HEK293 (cell line): ENCODE measurements at regions of chr2 and their contacts with region 1.

Region 1: DNA sequence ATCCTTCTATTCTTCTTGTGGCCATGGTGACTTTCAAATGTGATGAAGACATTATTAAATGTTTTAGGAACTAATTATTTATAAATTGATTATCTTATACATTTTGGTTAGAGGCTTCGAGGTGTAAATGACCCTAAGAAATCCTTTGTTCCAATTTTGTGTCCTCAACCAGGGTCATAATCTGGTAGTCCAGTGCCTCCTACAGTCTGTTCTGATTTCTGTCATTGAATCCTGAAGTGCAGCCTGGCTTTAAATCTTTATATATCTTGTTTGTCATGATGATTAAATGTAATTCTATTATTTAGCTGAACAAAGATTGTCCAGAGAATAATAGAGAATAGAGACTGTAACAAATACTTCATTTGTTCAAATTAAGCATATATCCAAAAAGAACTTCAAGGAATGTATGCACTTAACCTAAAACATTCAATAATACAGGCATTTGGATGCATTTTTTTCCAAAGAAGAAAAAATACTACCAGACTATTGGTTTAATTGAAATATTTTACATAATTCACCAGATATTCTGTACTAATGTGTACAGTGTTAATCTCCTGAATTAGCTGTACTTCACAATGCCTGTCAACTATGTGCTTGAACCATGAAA is 89.8 kb downstream of the PRPF40A start:
- H3K4me3 ChIP-seq: no peak overlapping the region
- H3K27ac ChIP-seq: no peak overlapping the region
- H3K4me1 ChIP-seq: no peaks in the 10 kb centered on the region
- CTCF ChIP-seq: no peak

Region 2: DNA sequence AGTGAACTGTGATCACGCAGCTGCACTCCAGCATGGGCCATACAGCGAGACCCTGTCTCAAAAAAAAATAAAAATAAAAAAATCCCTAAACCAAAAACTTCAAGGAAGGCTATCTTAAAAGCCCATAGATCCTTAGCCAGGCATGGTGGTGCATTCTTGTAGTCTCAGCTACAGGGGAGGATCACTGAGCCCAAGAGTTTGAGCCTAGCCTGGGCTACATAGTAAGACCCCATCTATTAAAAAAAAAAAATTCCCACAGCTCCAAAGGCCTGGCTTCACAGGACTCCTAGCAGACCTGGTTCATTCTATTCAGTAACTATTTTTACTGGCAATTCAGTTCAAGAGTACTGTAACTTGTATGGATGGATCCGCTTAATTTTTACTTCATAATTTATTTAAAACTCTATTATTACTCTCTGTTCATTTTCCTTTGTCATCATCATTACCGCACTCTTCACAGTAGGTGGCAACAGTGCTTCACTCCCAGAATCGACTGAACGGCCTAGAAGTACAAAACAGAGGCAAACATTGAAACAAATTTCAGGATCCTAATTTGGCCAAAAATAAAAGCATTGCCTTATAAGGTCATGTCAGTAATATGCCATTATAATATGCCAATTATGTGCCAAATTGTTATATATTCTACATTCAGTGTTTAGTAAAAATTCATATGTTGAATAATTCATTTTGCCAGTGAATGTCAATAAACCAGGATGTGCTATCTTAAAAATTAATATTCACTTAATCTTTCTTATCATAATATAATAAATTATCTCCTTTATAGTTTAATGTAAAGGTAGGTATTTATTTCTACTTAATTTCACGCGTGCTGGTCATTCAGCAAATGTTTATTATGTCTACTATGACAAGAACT is 437.6 kb before region 1 on chr2:
- CTCF ChIA-PET with region 1: interaction called, 12 read pairs
- POLR2A ChIA-PET with region 1: no interaction called
- H3K4me3 ChIP-seq: no peak overlapping the region
- H3K27ac ChIP-seq: no peak overlapping the region
- H3K4me1 ChIP-seq: no peaks in the 10 kb centered on the region
- CTCF ChIP-seq: peak; percentile 65

Region 3: DNA sequence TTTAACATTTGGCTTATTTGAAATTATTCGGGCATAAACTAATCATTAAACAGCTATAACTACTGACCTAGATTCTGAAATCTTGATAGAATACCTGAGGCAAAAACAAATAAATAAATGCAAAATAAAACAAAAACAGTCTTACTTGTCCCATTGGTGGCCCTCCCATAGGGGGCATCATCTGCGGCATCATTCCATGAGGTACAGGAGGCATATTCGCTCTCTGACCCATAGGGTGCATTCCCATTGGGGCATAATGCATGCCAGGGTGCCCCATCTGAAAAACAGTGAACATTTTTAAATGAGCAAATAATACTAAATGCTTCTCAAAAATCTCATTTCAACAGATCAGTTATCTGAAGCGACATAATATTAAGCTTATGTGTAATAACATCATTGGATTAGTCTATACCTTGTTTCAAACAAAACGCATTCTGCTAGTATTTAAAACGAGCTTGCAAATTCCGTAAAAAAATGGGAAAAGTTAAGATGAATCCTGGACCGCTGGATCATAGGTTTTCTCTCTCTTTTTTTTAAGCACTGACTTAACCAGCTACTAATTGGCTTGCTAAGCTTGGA is 88.5 kb after region 1 on chr2:
- CTCF ChIA-PET with region 1: no interaction called
- POLR2A ChIA-PET with region 1: no interaction called
- H3K4me3 ChIP-seq: peak overlapping the region; percentile 100
- H3K27ac ChIP-seq: no peak overlapping the region
- H3K4me1 ChIP-seq: 0 out of 2 replicates have a peak, but pooled peaks cover 5% of the 10 kb centered on the region
- CTCF ChIP-seq: peak; percentile 86